Activated CD4-positive, alpha-beta T cell treated with anti-CD3 and anti-CD28 coated beads, Interleukin-2, amount 10 ng/mL, durations not matched to agents 7 days and 5 days (primary cell): ENCODE measurements at regions of chr4 and their contacts with region 1.

Region 1: DNA sequence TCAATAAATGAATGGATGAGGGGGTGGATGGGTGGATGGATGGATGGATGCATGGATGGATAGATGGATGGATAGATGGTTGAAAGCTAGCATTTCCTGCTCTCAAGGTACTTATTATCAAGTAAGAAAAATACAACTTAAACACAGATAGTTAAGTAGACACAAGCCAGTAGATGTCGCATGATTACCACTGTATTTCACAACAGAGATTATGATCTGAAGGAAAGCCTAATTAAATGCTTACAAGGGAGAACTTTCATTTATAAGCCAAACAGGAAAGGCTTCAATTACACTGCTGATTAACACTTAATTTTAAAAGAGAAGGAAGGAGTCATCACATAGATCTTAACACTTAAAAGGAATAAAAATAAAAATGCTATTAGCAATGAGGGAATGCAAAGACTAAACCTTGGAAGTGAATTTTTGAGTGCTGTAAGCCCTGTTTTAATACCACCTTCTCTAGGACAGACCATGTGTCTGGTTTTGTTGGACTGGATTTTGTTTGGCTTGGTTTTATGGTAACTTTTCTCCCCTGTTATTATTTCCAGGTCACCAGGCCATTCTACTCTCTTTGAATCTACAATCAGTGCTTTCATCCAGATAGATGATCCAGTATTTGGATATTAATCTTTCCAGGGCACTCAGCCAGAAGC is 75.4 kb upstream of the SLC39A8 start:
- DNase-seq: no peak
- H3K4me3 Mint-ChIP-seq: no peak overlapping the region
- H3K27ac Mint-ChIP-seq: no peak overlapping the region
- H3K4me1 Mint-ChIP-seq: peaks cover 10% of the 10 kb centered on the region
- H3K27me3 Mint-ChIP-seq: peaks cover 4% of the 10 kb centered on the region

Region 2: DNA sequence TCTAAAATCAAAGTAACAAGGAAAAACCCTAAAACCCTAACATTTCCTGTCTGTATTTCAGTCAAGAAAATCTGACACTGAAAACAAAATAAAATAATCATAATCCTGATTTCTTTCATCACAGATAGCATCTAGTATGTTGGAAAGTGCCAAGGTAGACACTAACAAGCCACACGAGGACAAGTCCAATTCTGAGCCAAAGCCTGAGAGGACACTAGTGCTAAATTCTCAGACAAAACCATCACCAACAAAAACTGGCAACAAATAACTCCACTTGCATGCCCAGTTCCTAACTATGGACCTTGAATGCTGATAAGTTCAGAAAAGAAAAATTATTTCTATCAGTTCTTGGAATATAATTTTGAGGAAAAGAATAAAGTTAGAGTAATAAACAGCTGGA is 226.4 kb after region 1 on chr4:
- CTCF ChIA-PET with region 1: no interaction called
- POLR2A ChIA-PET with region 1: interaction called, 11 read pairs
- DNase-seq: no peak
- H3K4me3 Mint-ChIP-seq: no peak overlapping the region
- H3K27ac Mint-ChIP-seq: no peak overlapping the region
- H3K4me1 Mint-ChIP-seq: peaks cover 6% of the 10 kb centered on the region
- H3K27me3 Mint-ChIP-seq: no peaks in the 10 kb centered on the region